BJ (cell line): ENCODE measurements at regions of chr5 and their contacts with region 1.

Region 1: GRCh38 chr5:134275822-134276221 is 49.9 kb upstream of the PPP2CA start:
- DNase-seq: no peak
- H3K4me3 ChIP-seq: no peak overlapping the region
- H3K27me3 ChIP-seq: peaks cover 5% of the 10 kb centered on the region; the same call in 1 of the 2 replicates
- CTCF ChIP-seq: no peak

Region 2: GRCh38 chr5:134289509-134290113 is 13.8 kb after region 1 on chr5:
- CTCF ChIA-PET with region 1: interaction called, 58 read pairs
- POLR2A ChIA-PET with region 1: no interaction called
- DNase-seq: peak; percentile 19
- H3K4me3 ChIP-seq: no peak overlapping the region
- H3K27me3 ChIP-seq: no peaks in the 10 kb centered on the region; the same call in 1 of the 2 replicates
- CTCF ChIP-seq: peak; percentile 69